Activated naive CD4-positive, alpha-beta T cell treated with anti-CD3 and anti-CD28 coated beads for 36 hours (primary cell): ENCODE measurements at regions of chr6 and their contacts with region 1.

Region 1: DNA sequence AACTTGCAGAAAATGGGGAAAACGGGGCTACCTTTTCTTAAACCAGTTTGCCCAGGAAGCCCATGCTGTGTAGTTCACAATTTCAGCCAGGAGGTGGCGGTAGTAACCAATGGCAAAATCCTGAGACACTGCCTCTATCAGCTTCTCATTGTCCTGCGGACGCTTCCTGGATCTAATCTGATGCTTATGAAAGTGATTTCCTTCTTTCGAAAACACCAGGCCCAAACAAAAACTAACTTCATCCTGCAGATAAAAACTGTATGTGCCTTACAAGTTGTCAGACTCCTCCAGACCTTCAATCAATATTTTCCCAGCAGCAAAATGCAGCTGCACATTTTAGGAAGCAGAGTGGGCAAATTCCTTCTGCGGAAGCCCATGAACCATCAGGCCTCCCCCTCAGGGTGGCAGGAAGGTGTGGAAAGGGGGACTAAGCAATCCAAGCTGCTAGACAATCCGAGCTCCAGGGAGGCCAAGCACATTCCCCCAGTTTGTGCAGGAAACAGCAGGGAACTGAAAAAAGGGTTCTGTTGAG is 88.5 kb downstream of the LY86 start:
- DNase-seq: peak; percentile 92
- H3K4me3 Mint-ChIP-seq: no peak overlapping the region
- H3K27ac Mint-ChIP-seq: no peak overlapping the region
- H3K4me1 Mint-ChIP-seq: peaks cover 6% of the 10 kb centered on the region
- H3K27me3 Mint-ChIP-seq: no peaks in the 10 kb centered on the region

Region 2: GRCh38 chr6:6505111-6505510 is 171.9 kb before region 1 on chr6:
- CTCF ChIA-PET with region 1: no interaction called
- intact Hi-C with region 1: no loop called
- DNase-seq: no peak
- H3K4me3 Mint-ChIP-seq: no peak overlapping the region
- H3K27ac Mint-ChIP-seq: no peak overlapping the region
- H3K4me1 Mint-ChIP-seq: no peaks in the 10 kb centered on the region
- H3K27me3 Mint-ChIP-seq: peaks cover 19% of the 10 kb centered on the region

Region 3: GRCh38 chr6:6556738-6557505 is 120.1 kb before region 1 on chr6:
- CTCF ChIA-PET with region 1: interaction called, 3 read pairs
- intact Hi-C with region 1: loop called (anchors 1 kb)
- DNase-seq: peak; percentile 68
- H3K4me3 Mint-ChIP-seq: no peak overlapping the region
- H3K27ac Mint-ChIP-seq: no peak overlapping the region
- H3K4me1 Mint-ChIP-seq: peaks cover 44% of the 10 kb centered on the region
- H3K27me3 Mint-ChIP-seq: no peaks in the 10 kb centered on the region

Region 4: GRCh38 chr6:6696867-6697531 is 20.0 kb after region 1 on chr6:
- CTCF ChIA-PET with region 1: interaction called, 6 read pairs
- intact Hi-C with region 1: loop called (anchors 2 kb)
- DNase-seq: peak; percentile 65
- H3K4me3 Mint-ChIP-seq: no peak overlapping the region
- H3K27ac Mint-ChIP-seq: no peak overlapping the region
- H3K4me1 Mint-ChIP-seq: no peaks in the 10 kb centered on the region
- H3K27me3 Mint-ChIP-seq: peaks cover 10% of the 10 kb centered on the region

Region 5: GRCh38 chr6:6724539-6725467 is 47.8 kb after region 1 on chr6:
- CTCF ChIA-PET with region 1: interaction called, 23 read pairs
- intact Hi-C with region 1: loop called (anchors 1 kb)
- DNase-seq: peak; percentile 82
- H3K4me3 Mint-ChIP-seq: peak overlapping the region; percentile 34
- H3K27ac Mint-ChIP-seq: no peak overlapping the region
- H3K4me1 Mint-ChIP-seq: peaks cover 4% of the 10 kb centered on the region
- H3K27me3 Mint-ChIP-seq: no peaks in the 10 kb centered on the region

Region 6: DNA sequence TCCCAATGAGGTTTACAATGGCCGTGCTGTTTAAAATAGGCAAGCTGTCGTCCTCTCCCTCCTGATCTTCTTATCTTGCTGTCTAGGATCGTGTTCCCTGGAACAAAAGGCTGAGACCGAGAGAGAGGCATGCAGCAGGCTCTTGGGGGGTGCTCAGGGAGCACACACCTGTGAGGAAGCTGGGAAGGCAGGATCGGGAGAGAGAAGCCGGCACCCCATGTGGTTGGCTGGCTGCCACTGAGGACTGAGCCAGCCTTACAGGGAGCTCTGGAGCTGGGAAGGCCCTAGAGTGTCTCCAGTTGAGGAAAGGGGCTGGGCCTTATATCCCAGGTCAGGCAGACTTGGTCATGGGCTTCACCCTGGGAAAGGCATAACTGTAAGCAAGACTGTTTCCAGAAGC is 95.8 kb after region 1 on chr6:
- CTCF ChIA-PET with region 1: no interaction called
- intact Hi-C with region 1: no loop called
- DNase-seq: no peak
- H3K4me3 Mint-ChIP-seq: no peak overlapping the region
- H3K27ac Mint-ChIP-seq: no peak overlapping the region
- H3K4me1 Mint-ChIP-seq: no peaks in the 10 kb centered on the region
- H3K27me3 Mint-ChIP-seq: no peaks in the 10 kb centered on the region

Region 7: DNA sequence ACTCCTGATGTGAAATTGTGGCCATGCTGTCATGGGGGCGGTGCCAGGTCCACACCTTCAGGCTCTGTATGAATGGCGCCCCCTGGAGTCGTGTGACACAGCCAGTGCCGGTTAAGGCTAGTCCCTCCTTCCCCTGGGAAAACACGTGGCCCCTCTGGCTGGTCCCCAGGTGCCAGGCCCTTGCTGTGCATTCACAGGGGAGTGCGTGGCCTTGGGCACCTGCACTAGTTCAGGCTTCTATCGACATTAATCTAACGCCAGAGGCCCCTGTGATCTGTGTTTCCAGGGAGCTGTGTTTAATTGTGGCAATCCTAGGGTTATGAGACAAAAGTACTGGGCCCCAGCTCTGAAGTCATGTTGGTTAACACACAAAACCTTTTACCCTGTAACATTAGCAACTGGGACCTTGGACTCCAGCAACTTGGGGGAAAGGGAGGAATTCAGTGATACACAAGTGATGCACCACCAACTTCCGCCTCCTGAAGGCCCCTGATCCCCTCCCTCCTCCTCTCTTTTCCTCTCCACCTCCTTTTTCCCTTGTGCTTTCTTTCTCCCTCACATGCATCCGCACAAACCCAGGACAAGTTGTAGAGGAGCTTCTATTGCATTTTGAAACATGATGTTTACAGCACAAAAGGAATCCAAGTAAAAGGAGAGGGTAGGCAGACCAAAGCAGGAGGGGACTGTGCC is 562.1 kb after region 1 on chr6:
- CTCF ChIA-PET with region 1: interaction called, 8 read pairs
- intact Hi-C with region 1: loop called (anchors 1 kb)
- DNase-seq: peak; percentile 93
- H3K4me3 Mint-ChIP-seq: no peak overlapping the region
- H3K27ac Mint-ChIP-seq: peak overlapping the region; percentile 15
- H3K4me1 Mint-ChIP-seq: peaks cover 27% of the 10 kb centered on the region
- H3K27me3 Mint-ChIP-seq: no peaks in the 10 kb centered on the region